Cardiac septum (tissue), 1 donor: ENCODE measurements at regions of chr11 and their contacts with region 1.

Region 1: GRCh38 chr11:128789497-128790150 is 77.5 kb downstream of the KCNJ1 start:
- DNase-seq: no peak

Region 2: DNA sequence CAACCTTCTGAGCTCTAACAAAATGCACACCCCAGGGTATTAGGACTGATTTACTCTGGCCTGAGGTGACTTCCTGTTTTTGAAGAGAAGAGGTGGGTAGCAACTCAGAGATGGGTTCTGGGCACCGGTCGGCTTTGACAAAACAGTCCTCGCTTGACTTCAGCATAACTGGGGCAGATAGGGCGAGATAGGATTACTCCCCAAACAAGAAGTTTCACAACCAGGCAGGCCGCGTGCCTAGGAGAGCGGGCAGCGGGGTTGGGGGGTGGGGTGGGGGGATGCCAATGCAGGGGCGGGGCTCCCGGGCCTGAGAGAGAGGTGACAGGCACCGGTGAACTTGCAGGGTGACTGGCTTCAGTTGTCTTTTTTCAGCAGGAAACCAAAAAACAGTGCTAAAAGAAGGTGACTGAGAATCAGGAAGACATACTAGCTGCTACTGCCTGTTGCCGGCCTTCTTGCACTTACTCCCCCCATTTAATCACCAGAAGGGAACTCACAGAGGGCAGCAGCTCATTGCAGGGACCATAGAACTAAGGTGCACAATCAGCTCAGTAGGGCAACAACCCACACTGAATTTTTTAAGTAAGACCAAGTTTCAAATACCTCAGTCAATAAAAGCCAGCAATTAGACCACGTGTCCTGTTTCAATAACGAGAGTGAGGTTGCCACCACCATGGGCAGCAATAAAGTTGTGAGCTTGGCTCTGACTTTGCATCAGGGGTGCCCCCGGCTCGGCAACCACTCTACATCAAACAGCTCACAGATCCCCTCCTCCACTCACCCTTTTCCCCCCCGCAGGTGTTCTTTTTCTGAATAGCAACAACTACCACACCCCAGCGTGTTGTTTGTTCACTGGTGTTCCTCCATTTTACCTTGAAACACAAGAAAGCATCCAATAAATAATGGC is 165.1 kb before region 1 on chr11:
- intact Hi-C with region 1: no loop called
- DNase-seq: no peak

Region 3: DNA sequence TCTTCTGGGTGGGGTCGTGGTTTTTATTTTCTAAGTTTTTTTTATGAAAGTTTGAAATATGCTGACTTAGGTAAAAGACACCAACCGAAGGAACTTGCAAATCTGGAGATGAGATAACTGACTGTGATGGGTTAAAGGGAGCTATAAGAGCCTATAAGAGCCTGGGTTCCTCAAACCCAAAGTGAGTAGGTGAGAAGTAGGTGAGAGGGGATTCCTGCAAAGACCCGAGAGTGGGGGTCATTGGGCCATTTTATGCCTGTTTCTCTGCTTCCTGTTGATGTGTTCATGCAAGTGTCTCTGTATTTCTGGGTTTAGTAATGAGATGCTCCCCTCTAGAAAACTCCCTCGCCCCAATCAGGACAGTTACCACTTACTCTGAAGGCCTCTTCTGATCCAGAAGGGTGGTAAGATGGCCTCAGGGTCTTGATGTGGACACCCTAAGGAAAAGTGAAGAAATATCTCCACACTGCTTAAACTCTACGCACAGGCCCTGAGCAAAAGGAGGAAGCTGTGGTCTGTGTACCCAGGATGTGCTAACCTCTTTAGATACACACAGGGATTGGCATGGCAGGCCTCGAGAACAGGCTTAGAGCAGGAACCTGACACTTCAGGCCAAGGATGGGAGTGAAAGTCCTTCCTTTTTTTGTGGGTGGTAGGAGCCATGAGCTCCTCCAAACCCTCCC is 93.9 kb before region 1 on chr11:
- intact Hi-C with region 1: no loop called
- DNase-seq: peak; percentile 87

Region 4: DNA sequence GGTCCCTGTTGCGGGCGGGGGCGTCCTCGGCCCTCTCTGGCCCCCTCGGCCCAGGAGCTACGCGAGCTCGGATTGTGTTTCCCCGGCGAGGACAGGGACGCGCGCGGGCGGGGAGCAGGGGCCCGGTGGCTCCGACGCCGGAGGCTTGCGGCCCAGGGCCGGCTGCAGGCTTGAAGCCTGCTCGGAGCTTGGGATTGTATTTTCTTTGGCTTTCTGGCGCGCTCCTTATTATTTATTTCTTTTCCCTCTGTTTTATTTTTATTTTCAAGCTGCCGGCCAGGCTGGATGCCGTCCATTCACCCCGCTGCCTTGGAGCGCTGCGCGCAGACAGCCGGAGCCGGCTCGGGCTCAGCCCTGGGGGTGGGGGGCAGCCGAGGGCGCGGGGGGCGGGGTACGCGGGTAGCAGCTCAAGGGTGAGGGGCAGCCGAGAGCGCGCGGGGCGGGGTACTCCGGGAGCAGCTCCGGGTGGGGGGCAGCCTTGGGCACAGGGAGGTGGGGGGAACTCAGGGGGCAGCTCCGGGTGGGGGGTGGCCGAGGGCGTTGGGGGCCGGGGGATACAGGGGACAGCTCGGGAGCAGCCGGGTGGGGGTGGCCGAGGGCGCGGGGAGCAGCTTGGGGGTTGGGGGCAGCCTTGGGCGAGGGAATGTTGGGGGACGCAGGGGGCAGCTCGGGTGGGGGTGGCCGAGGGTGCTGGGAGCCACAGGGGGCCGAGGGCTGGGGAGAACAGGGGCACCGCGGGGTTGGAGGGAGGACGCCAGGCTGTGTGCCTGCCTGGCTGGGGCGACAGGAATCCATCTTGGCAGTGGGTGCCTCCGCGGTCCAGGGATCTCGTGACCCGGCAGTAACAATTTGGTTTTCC is 34.8 kb after region 1 on chr11:
- intact Hi-C with region 1: loop called (anchors 5 kb)
- DNase-seq: no peak

Region 5: DNA sequence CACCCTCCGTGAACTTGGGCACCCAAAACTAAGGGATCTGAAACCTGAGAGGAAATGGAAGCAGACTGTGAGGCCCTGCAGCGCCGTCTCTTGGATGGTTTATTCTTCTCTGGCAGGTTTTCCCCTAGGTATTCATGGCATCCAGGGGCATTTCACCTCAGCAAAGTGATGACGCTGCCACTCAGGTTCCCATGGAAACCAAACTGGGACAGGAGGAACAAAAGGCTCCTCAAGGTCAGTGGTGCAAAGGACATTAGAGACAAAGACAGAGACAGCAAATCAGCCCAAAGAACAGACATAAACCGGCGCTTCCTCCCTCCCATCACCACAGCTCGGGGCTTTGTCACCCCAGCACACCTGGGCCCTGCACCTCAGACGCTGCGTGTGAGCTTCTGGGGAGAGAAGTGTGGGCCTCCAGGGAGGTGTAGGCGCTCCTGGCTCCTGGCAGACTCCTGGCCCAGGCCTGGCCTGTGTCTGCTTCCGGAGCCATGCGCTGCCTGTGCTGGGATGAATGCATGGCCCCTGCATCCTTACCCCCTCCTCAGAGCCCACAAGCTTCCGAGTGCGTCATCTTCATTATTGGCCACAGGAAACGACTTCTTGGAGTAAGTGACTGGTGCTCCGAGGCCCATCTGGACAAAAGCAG is 147.1 kb after region 1 on chr11:
- intact Hi-C with region 1: no loop called
- DNase-seq: peak; percentile 29

Region 6: DNA sequence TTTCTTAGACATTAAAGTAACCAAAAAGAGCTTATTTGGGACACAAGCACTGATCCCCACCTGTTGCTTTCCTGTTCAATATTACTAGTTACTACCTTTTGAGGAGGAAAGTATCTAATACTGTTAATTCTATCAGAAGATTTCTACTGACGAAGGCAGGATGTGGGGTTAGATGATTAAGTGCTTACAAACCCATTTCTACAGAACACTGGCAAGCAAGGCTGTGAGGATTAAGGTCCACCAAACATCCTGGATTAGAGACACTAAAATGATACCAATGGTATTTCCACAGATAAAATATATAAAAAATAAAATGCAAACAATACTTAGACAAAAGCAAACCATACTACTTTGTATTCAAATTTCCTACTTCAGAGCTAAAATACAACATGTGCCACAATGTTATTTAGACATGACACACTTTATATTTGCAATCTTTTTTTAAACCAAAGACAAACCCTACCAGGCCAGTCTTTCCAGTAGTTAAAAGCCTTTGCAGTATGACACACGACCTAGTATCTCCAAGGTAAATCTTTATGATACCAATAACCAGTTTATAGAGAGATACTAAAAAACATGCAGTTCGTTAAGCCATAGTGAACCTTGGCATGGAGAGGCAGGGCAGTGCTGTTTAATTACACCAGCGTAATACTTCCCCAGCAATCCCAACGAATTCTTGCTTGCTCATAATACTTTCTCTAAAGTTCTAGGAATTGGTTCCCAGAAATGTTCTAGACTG is 224.3 kb after region 1 on chr11:
- intact Hi-C with region 1: no loop called
- DNase-seq: no peak